Right ventricle myocardium inferior (tissue), 1 donor: ENCODE measurements at regions of chr10 and their contacts with region 1.

Region 1: GRCh38 chr10:60810809-60811182 is 32.5 kb downstream of the CDK1 start:
- DNase-seq: no peak
- ATAC-seq: peak; percentile 94

Region 2: GRCh38 chr10:60377955-60378354 is 432.8 kb before region 1 on chr10:
- intact Hi-C with region 1: no loop called
- DNase-seq: no peak
- ATAC-seq: no peak

Region 3: DNA sequence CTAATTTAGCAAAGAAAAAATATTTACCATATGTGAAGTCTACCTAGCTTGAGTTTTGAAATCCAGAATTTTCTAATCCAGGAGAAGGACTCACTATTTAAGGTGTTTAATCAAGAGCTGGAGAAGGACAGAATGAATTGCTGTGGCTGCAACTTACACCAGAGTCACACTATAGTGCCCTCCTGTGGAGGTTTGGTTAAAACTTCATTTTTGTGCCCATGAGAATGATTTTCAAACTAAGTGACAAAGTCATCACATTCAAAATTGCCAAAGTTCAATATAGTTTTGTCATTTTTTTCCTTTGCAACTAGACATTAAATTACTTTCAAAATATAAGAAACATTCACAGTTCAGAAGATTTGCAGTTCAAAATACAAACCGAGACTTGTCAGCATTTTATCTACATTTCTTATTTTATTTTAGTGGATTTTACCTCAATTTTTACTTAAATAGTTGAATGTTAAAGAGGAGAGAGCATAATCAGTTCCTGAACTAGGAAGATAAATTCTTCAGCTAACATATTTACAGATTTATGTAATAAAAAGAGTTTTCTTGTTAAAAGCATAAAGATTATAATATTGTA is 922.7 kb after region 1 on chr10:
- intact Hi-C with region 1: loop called (anchors 5 kb)
- DNase-seq: no peak
- ATAC-seq: no peak